Gastrocnemius medialis (tissue), 4 donors: ENCODE measurements at regions of chr16 and their contacts with region 1.

Region 1: GRCh38 chr16:53346-54236 is at the starts of genes POLR3K and SNRNP25:
- DNase-seq: peak; percentile 100
- ATAC-seq: peak; percentile 92 to 94
- H3K4me3 ChIP-seq: peak within 1 kb of the TSS; percentile 80 to 100 (median 89)
- H3K27ac ChIP-seq: peak within 1 kb of the TSS; percentile 86 to 90 (median 88)
- H3K4me1 ChIP-seq: peaks cover 9 to 14% of the 10 kb centered on the region in 2 donors
- H3K27me3 ChIP-seq: no peaks in the 10 kb centered on the region
- CTCF ChIP-seq: peak in 1 of 5 experiments; percentile 5
- POLR2A ChIP-seq: peak; percentile 81 to 86
- total RNA-seq, gene POLR3K: 2.2 to 3.7 (median 2.9) TPM
- total RNA-seq, gene SNRNP25: 42.8 to 77.6 (median 69.7) TPM

Region 2: DNA sequence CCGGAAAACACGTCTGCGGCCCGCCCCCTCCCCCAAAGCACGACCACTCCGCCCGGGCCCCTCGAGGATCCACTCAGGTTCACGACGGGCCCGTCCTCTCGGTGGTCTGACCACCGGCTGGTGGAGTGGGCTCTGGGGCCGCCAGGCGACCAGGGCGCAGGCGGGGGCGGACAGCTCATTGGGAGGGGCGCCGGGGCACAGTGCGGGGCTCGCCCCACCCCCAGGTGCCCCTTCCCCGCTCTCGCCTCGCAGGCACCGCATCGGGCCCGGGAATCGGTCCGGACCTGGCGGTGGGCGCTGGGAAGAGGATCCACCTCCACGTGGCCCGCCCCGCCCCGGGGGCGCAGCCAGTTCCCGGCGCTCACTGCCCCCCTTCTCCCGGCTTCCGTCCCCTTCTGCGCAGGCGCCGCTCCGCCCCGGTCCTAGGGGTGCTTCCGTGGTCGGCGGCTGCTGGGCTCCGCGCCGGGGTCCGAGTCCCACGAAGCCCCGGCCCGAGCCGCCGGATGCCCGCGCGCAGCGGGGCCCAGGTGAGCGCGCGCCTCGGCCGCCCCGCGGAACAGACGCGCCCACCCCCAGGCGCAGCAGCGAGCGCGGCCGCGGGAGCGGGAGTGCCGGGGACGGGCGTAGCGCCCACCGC is 24.3 kb after region 1 on chr16 and contains the start of gene MPG:
- in situ Hi-C with region 1: no loop called
- intact Hi-C with region 1: loop called (anchors 2 kb)
- DNase-seq: peak; percentile 68 to 80
- ATAC-seq: peak; percentile 75 to 77
- H3K4me3 ChIP-seq: peak within 1 kb of the TSS; percentile 77 to 86 (median 78)
- H3K27ac ChIP-seq: peak within 1 kb of the TSS; percentile 80 to 93 (median 92)
- H3K4me1 ChIP-seq: peaks cover 28 to 44% of the 10 kb centered on the region in 2 donors
- H3K27me3 ChIP-seq: no peaks in the 10 kb centered on the region
- CTCF ChIP-seq: peak in 1 of 5 experiments; percentile 6
- POLR2A ChIP-seq: peak; percentile 88 to 95
- total RNA-seq, gene MPG: 75.0 to 124 (median 83.0) TPM